Ascending aorta (tissue), 2 donors: ENCODE measurements at regions of chr6 and their contacts with region 1.

Region 1: DNA sequence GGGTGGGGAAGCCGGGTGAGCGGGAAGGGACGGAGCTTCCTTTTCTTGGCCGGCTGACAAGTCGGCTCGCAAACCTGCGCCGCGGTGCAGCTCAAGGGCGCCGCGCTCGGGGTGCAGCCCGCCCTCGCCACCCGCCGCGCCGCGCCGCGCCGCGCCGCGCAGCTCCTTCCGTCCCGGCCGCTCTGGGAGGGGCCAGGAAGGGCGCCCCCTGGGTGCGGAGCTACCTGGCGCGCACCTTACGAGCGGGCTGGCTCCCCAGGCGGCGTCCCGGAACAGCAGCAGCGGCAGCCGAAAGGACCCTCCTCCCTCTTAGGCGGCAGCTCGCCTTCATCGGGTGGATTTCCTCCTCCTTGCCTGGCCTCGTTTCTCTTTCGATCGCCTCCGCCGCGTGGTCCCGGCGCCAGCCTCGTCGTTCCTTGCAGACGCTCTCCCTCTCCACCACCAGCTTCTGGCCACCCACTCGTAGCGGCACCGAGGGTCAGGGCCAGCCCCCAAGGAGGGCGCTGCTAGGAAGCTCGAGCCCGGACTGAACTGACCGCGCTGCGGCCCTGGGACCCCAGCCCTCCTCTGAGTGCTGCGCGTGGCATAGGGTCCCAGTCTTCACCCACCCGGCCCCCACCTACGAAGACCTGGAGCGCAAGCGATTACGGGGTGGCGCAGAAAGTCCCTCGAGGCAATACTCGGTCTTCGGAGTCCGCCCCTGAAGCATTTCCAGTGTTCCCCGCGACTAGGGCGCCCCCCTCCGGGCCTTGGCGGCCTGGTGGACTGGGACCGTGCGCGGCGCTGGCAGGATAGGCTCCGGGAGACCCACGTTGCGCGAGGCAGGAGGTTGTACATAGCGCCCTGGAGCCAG is at the start of gene MAP3K5:
- DNase-seq: peak; percentile 77 to 98
- H3K4me3 ChIP-seq: peak within 1 kb of the TSS; percentile 74 to 81
- H3K27ac ChIP-seq: peak within 1 kb of the TSS; percentile 98 to 99
- H3K4me1 ChIP-seq: peaks cover 3 to 16% of the 10 kb centered on the region in 2 donors
- H3K27me3 ChIP-seq: no peaks in the 10 kb centered on the region
- CTCF ChIP-seq: peak; percentile 82 to 89 (median 85)
- total RNA-seq, gene MAP3K5: 40.9 TPM

Region 2: DNA sequence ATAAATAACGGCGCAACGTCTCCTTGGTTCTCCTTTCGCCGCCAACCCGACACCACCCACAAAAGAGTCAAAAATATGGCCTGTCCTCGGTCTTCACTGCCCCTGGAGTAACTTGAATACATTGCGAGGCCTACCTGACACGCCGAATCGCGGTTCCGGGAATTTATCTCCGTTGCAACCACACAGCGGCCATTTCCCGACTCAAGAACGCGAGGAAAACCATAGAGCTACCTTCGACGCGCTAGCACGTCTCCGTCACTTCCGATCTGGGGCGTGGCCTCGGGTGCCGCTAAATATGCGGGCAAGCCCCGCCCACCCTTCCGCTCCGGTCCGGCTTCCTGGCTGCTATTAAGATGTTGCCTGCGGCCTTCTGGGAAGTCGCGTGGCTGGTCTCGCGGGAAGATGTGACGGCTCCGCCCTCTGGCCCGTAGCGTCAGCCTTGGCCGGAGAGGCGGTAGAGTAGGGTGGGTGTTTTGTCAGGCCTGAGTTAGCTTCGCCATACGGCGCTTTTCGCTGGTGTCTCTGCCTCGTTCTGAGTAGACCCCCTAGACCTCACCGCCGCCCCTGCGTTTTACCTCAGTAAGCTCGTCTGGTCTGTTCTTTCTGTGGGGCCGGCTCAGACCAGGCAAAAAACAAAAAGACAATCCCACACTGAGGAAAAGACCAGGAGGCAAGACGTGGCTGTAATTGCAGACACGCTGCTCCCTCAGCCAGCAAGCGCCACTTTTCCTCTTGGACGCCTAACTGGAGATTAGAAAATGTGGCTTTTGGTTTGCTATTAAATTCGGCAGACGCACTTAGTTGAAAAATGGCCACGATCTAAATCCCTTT is 502.8 kb before region 1 on chr6 and contains the start of gene BCLAF1:
- intact Hi-C with region 1: loop called (anchors 10 kb)
- DNase-seq: peak; percentile 99 to 100
- H3K4me3 ChIP-seq: peak within 1 kb of the TSS; percentile 76 to 83
- H3K27ac ChIP-seq: peak within 1 kb of the TSS; percentile 98 to 99
- H3K4me1 ChIP-seq: peaks cover 13 to 22% of the 10 kb centered on the region in 2 donors
- H3K27me3 ChIP-seq: no peaks in the 10 kb centered on the region
- CTCF ChIP-seq: no peak
- total RNA-seq, gene BCLAF1: 42.6 TPM

Region 3: DNA sequence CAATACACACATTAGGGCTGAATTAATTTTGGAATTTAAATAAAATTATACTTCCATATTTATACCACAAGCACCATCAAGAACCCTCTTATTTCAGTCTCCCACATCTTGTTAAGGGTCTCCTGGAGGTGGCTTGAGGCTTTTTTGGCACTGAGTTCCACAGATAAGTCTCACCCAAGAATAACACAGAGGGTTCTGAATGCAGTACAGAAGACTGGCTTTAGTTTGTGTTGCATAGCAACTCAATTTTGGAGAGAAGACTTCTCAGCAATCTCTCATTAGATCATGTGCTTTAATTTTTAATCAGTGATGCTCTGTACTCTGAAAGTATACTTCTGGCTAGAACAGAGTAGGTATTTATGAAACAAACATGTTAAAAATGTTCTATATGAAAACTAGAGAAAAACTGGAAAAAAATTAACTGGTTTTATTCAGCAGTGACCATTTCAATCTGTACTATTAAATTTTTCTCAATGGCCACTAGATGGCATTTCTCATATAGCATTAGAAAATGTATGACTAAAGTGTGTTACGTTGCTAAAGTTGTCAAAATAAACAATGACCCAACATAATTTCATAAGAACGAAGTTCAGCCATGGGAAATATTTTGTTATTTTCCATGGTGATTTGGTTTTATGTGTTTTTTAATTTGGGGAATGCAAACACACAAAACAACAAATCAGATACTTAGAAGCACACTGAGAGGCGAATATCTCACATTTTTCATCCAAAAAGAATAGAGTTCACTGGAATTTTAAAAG is 209.7 kb before region 1 on chr6:
- intact Hi-C with region 1: loop called (anchors 1 kb)
- DNase-seq: no peak
- H3K4me3 ChIP-seq: no peak overlapping the region
- H3K27ac ChIP-seq: peak overlapping the region; percentile 81 to 86
- H3K4me1 ChIP-seq: peaks cover 5 to 42% of the 10 kb centered on the region in 2 donors
- H3K27me3 ChIP-seq: no peaks in the 10 kb centered on the region
- CTCF ChIP-seq: peak; percentile 50 to 65 (median 63)

Region 4: GRCh38 chr6:136643850-136644596 is 148.6 kb before region 1 on chr6:
- intact Hi-C with region 1: loop called (anchors 1 kb)
- DNase-seq: peak; percentile 76 to 98
- H3K4me3 ChIP-seq: no peak overlapping the region
- H3K27ac ChIP-seq: peak overlapping the region; percentile 61 to 80
- H3K4me1 ChIP-seq: peaks cover 0 to 40% of the 10 kb centered on the region in 2 donors
- H3K27me3 ChIP-seq: no peaks in the 10 kb centered on the region
- CTCF ChIP-seq: peak; percentile 87 to 92 (median 87)

Region 5: GRCh38 chr6:136737871-136738691 is 54.6 kb before region 1 on chr6:
- intact Hi-C with region 1: loop called (anchors 2 kb)
- DNase-seq: peak in 1 of 2 donors; percentile 77
- H3K4me3 ChIP-seq: peak overlapping the region in 1 of 2 donors; percentile 12
- H3K27ac ChIP-seq: peak overlapping the region; percentile 78 to 82
- H3K4me1 ChIP-seq: peaks cover 8 to 47% of the 10 kb centered on the region in 2 donors
- H3K27me3 ChIP-seq: no peaks in the 10 kb centered on the region
- CTCF ChIP-seq: no peak

Region 6: GRCh38 chr6:136822376-136823127 is 29.9 kb after region 1 on chr6 and contains the start of gene PEX7:
- intact Hi-C with region 1: loop called (anchors 1 kb)
- DNase-seq: peak; percentile 47 to 93
- H3K4me3 ChIP-seq: peak within 1 kb of the TSS; percentile 73 to 95
- H3K27ac ChIP-seq: peak within 1 kb of the TSS; percentile 88 to 97
- H3K4me1 ChIP-seq: no peaks in the 10 kb centered on the region
- H3K27me3 ChIP-seq: no peaks in the 10 kb centered on the region
- CTCF ChIP-seq: peak; percentile 42 to 57 (median 56)
- total RNA-seq, gene PEX7: 10.5 TPM